ENCODE measurements at regions of chr1 and their contacts with region 1.

Region 1: DNA sequence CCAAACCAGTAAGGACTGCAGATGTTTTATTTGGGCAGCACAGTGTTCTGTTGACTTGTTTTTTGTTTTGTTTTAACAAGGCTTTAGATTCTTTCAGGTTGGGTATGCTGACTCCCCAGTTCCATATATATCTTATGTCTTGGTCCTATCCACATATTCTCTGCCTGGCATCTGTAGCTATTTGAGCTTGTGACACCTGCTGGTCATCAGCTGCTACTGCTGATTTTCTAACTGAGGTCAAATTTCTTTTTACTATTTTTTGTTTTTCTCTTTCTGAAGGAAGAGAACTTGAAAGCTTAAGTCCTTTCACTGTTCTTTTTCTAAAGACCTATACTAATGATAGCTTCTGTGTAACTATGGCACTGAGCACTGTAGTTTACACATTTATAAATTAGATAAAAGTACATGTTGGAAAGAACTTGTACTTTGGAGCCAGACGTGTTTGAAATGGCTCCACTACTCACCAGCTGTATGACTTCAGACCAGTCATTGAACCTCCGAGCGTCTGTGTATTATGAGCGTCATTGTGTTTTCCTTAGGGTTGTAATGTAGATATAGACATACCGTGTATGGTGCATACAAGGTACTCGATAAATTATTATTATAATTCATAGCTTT is 109.4 kb downstream of the NRDC start:
- DNase-seq: peak; percentile 32 to 65
- ATAC-seq: peak; percentile 54 to 82; a peak in 4 of 6 replicates
- H3K4me3 ChIP-seq: no peak overlapping the region
- H3K27ac ChIP-seq: no peak overlapping the region
- H3K4me1 ChIP-seq: no peaks in the 10 kb centered on the region
- CTCF ChIP-seq: peak; percentile 69
- EP300 ChIP-seq: no peak
- POLR2A ChIP-seq: no peak
- RAD21 ChIP-seq: peak; percentile 66 to 70

Region 2: GRCh38 chr1:51558360-51558924 is 210.6 kb before region 1 on chr1:
- CTCF ChIA-PET with region 1: no interaction called
- POLR2A ChIA-PET with region 1: no interaction called
- DNase-seq: peak in 1 of 2 experiments; percentile 13
- ATAC-seq: peak; percentile 70 to 79
- H3K4me3 ChIP-seq: no peak overlapping the region
- H3K27ac ChIP-seq: peak overlapping the region; percentile 35 to 78; a peak in 4 of 6 replicates
- H3K4me1 ChIP-seq: peaks cover 20% of the 10 kb centered on the region
- CTCF ChIP-seq: no peak
- EP300 ChIP-seq: no peak
- POLR2A ChIP-seq: no peak
- RAD21 ChIP-seq: no peak

Region 3: GRCh38 chr1:51627678-51628077 is 141.4 kb before region 1 on chr1:
- CTCF ChIA-PET with region 1: interaction called, 13 read pairs
- POLR2A ChIA-PET with region 1: no interaction called
- DNase-seq: peak in 1 of 2 experiments; percentile 47
- ATAC-seq: peak; percentile 59 to 76; a peak in 3 of 6 replicates
- H3K4me3 ChIP-seq: no peak overlapping the region
- H3K27ac ChIP-seq: no peak overlapping the region; a peak in 1 of 6 replicates
- H3K4me1 ChIP-seq: peaks cover 35% of the 10 kb centered on the region
- CTCF ChIP-seq: peak; percentile 38
- EP300 ChIP-seq: no peak
- POLR2A ChIP-seq: no peak
- RAD21 ChIP-seq: peak; percentile 57 to 61

Region 4: GRCh38 chr1:51790385-51790784 is 21.3 kb after region 1 on chr1:
- CTCF ChIA-PET with region 1: interaction called, 10 read pairs
- POLR2A ChIA-PET with region 1: no interaction called
- DNase-seq: no peak
- ATAC-seq: no peak
- H3K4me3 ChIP-seq: no peak overlapping the region
- H3K27ac ChIP-seq: no peak overlapping the region
- H3K4me1 ChIP-seq: no peaks in the 10 kb centered on the region
- CTCF ChIP-seq: no peak
- EP300 ChIP-seq: no peak
- POLR2A ChIP-seq: no peak
- RAD21 ChIP-seq: no peak

Measured in A549 (cell line).